CD4-positive, alpha-beta T cell (primary cell): ENCODE measurements at regions of chr3 and their contacts with region 1.

Region 1: DNA sequence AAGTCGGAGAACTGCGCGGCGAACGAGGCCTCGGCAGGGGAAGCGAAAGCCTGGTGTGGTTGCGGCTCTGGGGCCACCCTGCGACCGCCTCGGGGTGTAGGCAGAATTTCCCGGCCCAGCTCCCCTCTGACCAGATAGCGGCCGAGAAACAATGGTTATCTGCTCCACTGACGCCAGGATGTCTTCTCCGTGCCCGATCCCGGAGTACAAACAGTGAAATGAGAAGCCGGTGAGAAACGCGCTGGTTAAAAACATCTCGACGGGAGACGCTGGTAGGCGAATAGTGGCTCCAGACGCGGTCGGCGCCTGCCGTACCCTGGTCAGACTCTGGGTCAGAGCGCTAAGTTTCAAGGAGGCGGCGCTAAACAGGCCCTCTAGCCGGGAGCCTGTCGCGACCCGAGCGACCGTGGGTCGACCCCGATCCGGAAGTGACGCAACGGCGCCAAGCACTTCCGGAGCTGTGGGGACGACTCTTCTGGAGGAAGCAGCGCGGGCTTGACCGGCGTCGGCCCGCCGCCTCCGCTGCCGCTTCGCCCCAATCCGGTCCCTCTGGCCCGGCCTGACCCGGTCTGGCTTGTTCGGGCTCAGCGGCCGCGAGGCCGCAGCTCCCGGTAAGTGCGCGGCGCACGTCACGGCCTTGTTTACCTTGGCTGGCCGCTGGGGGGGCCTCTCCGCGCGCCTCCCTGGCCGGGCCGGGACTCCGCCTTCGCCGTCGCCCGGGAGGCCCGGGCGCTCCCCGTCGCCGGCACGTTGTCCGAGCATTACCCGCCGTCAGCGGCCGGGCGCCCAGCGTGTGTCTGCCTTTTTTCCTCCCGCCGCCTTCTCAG is at the start of gene ARIH2:
- DNase-seq: peak; percentile 74 to 95 (median 82)
- ATAC-seq: peak; percentile 73
- H3K4me3 ChIP-seq: peak within 1 kb of the TSS; percentile 99
- H3K4me3 Mint-ChIP-seq: peak within 1 kb of the TSS; percentile 94
- H3K27ac ChIP-seq: peak within 1 kb of the TSS; percentile 98 to 99
- H3K27ac Mint-ChIP-seq: peak within 1 kb of the TSS; percentile 99
- H3K4me1 ChIP-seq: peaks cover 37% of the 10 kb centered on the region
- H3K4me1 Mint-ChIP-seq: peaks cover 26% of the 10 kb centered on the region
- H3K27me3 ChIP-seq: no peaks in the 10 kb centered on the region
- H3K27me3 Mint-ChIP-seq: no peaks in the 10 kb centered on the region
- CTCF ChIP-seq: no peak
- total RNA-seq, gene ARIH2: 182 TPM

Region 2: GRCh38 chr3:48716982-48717746 is 201.4 kb before region 1 on chr3 and contains the start of gene IP6K2:
- CTCF ChIA-PET with region 1: interaction called, 4 read pairs
- POLR2A ChIA-PET with region 1: interaction called, 20 read pairs
- intact Hi-C with region 1: loop called in 1 of 2 experiments (anchors 1 kb)
- DNase-seq: peak; percentile 97 to 99 (median 98)
- ATAC-seq: peak; percentile 99
- H3K4me3 ChIP-seq: peak within 1 kb of the TSS; percentile 89
- H3K4me3 Mint-ChIP-seq: peak within 1 kb of the TSS; percentile 96
- H3K27ac ChIP-seq: peak within 1 kb of the TSS; percentile 77 to 88
- H3K27ac Mint-ChIP-seq: peak within 1 kb of the TSS; percentile 88
- H3K4me1 ChIP-seq: peaks cover 38% of the 10 kb centered on the region
- H3K4me1 Mint-ChIP-seq: peaks cover 43% of the 10 kb centered on the region
- H3K27me3 ChIP-seq: no peaks in the 10 kb centered on the region
- H3K27me3 Mint-ChIP-seq: no peaks in the 10 kb centered on the region
- CTCF ChIP-seq: no peak
- total RNA-seq, gene IP6K2: 97.2 to 121 TPM

Region 3: DNA sequence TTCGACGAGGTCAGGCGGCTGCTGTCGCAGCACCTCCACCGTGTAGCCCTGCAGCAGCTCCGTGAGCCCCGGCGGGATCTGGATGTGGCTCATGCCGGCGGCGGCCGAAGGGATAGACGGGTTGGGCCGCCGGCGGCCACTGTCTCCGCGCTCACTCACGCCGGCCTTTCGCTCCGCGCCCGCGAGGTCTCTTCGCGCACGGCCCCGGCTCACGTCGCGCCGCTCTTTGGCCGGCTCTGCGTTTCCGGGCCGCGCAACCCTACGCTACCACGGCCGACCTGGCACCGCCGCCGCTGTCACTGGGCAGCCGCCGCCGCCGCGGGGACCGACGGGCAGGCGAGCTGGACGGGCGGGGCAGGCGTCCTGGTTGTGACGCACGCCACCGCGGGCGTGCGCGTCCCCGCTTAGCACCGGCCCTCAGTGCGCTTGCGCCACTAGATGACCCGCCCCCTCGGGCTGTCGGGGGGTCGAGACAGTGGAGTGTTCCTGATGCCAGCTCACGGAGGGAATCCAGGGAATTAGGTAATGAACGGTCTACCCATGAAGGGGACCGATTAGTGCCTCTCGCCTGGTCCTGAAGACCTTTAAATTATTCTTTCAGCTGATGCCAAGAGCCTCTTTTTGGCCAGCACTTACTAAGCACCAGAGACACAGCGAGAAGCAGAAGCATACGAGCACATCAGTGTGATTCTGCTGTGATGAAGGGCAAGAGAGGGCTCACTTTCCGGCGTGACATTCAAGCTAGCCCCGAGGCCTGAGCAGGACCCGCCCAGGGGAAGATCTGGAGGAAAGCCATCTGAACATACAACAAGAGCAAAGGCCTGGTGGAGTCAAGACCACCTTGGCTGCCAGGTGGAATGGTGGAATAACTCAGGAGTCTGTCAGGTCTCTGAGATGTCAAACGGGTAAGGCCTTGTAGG is 70.8 kb before region 1 on chr3 and contains the start of gene PRKAR2A:
- CTCF ChIA-PET with region 1: no interaction called
- POLR2A ChIA-PET with region 1: interaction called, 17 read pairs
- intact Hi-C with region 1: loop called in 1 of 2 experiments (anchors 5 kb)
- DNase-seq: peak; percentile 56 to 92 (median 77)
- ATAC-seq: peak; percentile 61
- H3K4me3 ChIP-seq: peak within 1 kb of the TSS; percentile 75
- H3K4me3 Mint-ChIP-seq: peak within 1 kb of the TSS; percentile 96
- H3K27ac ChIP-seq: peak within 1 kb of the TSS; percentile 57 to 66
- H3K27ac Mint-ChIP-seq: peak within 1 kb of the TSS; percentile 97
- H3K4me1 ChIP-seq: peaks cover 31% of the 10 kb centered on the region
- H3K4me1 Mint-ChIP-seq: peaks cover 34% of the 10 kb centered on the region
- H3K27me3 ChIP-seq: no peaks in the 10 kb centered on the region
- H3K27me3 Mint-ChIP-seq: no peaks in the 10 kb centered on the region
- CTCF ChIP-seq: no peak
- total RNA-seq, gene PRKAR2A: 47.4 to 48.3 TPM

Region 4: DNA sequence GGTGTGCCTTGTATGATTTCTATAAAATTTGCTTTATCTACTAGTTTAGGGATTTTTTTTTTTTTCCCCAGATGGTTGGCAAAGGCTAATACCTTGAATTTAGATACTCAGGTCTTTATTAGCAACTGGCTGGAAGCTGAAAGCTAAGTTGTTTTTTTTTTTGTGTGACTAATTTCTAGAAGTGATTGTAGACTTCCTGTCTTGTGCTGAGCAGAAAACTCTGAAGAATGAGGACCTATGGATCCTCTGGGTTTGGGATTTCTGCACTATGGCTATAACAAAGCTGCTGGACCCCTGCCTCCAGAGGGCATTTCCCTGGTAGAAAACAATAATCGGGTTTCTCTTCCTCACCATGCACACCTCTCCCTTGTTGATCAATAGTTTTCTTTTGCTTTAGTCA is 10.1 kb after region 1 on chr3:
- CTCF ChIA-PET with region 1: interaction called, 23 read pairs
- POLR2A ChIA-PET with region 1: interaction called, 8 read pairs
- intact Hi-C with region 1: no loop called
- DNase-seq: no peak
- ATAC-seq: no peak
- H3K4me3 ChIP-seq: no peak overlapping the region
- H3K4me3 Mint-ChIP-seq: peak overlapping the region; percentile 25
- H3K27ac ChIP-seq: no peak overlapping the region
- H3K27ac Mint-ChIP-seq: no peak overlapping the region
- H3K4me1 ChIP-seq: peaks cover 49% of the 10 kb centered on the region
- H3K4me1 Mint-ChIP-seq: peaks cover 63% of the 10 kb centered on the region
- H3K27me3 ChIP-seq: no peaks in the 10 kb centered on the region
- H3K27me3 Mint-ChIP-seq: no peaks in the 10 kb centered on the region
- CTCF ChIP-seq: no peak

Region 5: DNA sequence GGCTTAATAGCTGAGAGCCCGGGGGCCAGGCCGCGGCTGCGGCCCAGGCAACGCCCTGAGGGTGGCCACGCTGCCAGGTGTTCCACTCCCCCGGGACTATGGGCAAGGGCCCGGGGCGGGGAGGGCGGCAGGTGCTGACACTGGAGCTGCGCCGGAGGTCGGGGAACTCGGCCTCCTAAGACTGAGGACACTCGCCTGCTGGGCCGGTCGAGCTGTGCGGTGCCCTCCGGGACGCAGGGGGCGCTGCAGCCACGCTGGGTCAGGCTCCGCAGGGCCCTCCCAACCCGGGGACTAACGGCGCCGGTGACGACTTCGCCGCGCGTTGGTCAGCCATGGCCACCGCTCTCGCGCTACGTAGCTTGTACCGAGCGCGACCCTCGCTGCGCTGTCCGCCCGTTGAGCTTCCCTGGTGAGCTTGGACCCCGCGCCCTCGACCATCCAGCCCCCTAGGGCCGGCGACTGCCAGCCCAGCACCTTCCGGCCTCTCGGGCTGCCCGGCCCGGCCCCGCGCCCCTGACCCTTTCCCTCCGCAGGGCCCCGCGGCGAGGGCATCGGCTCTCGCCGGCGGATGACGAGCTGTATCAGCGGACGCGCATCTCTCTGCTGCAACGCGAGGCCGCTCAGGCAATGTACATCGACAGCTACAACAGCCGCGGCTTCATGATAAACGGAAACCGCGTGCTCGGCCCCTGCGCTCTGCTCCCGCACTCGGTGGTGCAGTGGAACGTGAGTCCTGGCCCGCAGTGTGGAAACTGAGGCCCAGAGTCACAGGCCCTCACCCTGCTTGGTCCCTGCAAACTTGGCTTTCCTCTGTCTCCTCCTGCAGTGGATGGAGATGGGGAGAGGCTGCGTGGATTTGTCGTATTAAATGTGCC is 103.4 kb after region 1 on chr3 and contains the start of gene NDUFAF3:
- CTCF ChIA-PET with region 1: no interaction called
- POLR2A ChIA-PET with region 1: interaction called, 16 read pairs
- intact Hi-C with region 1: loop called in 1 of 2 experiments (anchors 5 kb)
- DNase-seq: peak; percentile 81 to 95 (median 90)
- ATAC-seq: peak; percentile 74
- H3K4me3 ChIP-seq: peak within 1 kb of the TSS; percentile 80
- H3K4me3 Mint-ChIP-seq: peak within 1 kb of the TSS; percentile 95
- H3K27ac ChIP-seq: peak within 1 kb of the TSS; percentile 92 to 98
- H3K27ac Mint-ChIP-seq: peak within 1 kb of the TSS; percentile 90
- H3K4me1 ChIP-seq: peaks cover 63% of the 10 kb centered on the region
- H3K4me1 Mint-ChIP-seq: peaks cover 50% of the 10 kb centered on the region
- H3K27me3 ChIP-seq: no peaks in the 10 kb centered on the region
- H3K27me3 Mint-ChIP-seq: no peaks in the 10 kb centered on the region
- CTCF ChIP-seq: peak; percentile 99
- total RNA-seq, gene NDUFAF3: 52.7 to 53.2 TPM

Region 6: GRCh38 chr3:49165771-49166751 is 247.5 kb after region 1 on chr3 and contains the start of gene CCDC71:
- CTCF ChIA-PET with region 1: no interaction called
- POLR2A ChIA-PET with region 1: no interaction called
- intact Hi-C with region 1: loop called in 1 of 2 experiments (anchors 10 kb)
- DNase-seq: peak; percentile 55 to 89 (median 70)
- ATAC-seq: peak; percentile 80
- H3K4me3 ChIP-seq: peak within 1 kb of the TSS; percentile 94
- H3K4me3 Mint-ChIP-seq: peak within 1 kb of the TSS; percentile 97
- H3K27ac ChIP-seq: peak within 1 kb of the TSS; percentile 48 to 61
- H3K27ac Mint-ChIP-seq: peak within 1 kb of the TSS; percentile 91
- H3K4me1 ChIP-seq: peaks cover 31% of the 10 kb centered on the region
- H3K4me1 Mint-ChIP-seq: peaks cover 44% of the 10 kb centered on the region
- H3K27me3 ChIP-seq: no peaks in the 10 kb centered on the region
- H3K27me3 Mint-ChIP-seq: no peaks in the 10 kb centered on the region
- CTCF ChIP-seq: no peak
- total RNA-seq, gene CCDC71: 14.7 to 16.0 TPM

Region 7: GRCh38 chr3:49454458-49454857 is 535.9 kb after region 1 on chr3:
- CTCF ChIA-PET with region 1: no interaction called
- POLR2A ChIA-PET with region 1: no interaction called
- intact Hi-C with region 1: no loop called
- DNase-seq: peak in 1 of 14 experiments; percentile 7
- ATAC-seq: no peak
- H3K4me3 ChIP-seq: no peak overlapping the region
- H3K4me3 Mint-ChIP-seq: no peak overlapping the region
- H3K27ac ChIP-seq: no peak overlapping the region
- H3K27ac Mint-ChIP-seq: no peak overlapping the region
- H3K4me1 ChIP-seq: no peaks in the 10 kb centered on the region
- H3K4me1 Mint-ChIP-seq: no peaks in the 10 kb centered on the region
- H3K27me3 ChIP-seq: no peaks in the 10 kb centered on the region
- H3K27me3 Mint-ChIP-seq: no peaks in the 10 kb centered on the region
- CTCF ChIP-seq: no peak